ENCODE measurements at regions of chr4 and their contacts with region 1.

Region 1: GRCh38 chr4:123649645-123650391 is 253.2 kb downstream of the SPRY1 start:
- DNase-seq: peak; percentile 89

Region 2: GRCh38 chr4:123396307-123397143 is 253.3 kb before region 1 on chr4 and contains the start of gene SPRY1:
- in situ Hi-C with region 1: loop called (anchors 25 kb)
- DNase-seq: peak; percentile 82
- total RNA-seq, gene SPRY1: 0.98 and 2.6 TPM in 2 replicates

Measured in Caki2 (cell line).